ENCODE measurements at regions of chr15 and their contacts with region 1.

Region 1: GRCh38 chr15:40952901-40953712 is at the start of gene CHAC1:
- DNase-seq: peak; percentile 99
- ATAC-seq: peak; percentile 83
- H3K4me3 Mint-ChIP-seq: peak within 1 kb of the TSS; percentile 83
- H3K27ac Mint-ChIP-seq: peak within 1 kb of the TSS; percentile 98
- H3K4me1 Mint-ChIP-seq: peaks cover 39% of the 10 kb centered on the region
- H3K27me3 Mint-ChIP-seq: no peaks in the 10 kb centered on the region
- CTCF ChIP-seq: no peak
- total RNA-seq, gene CHAC1: 17.2 to 31.0 TPM (median 17.7 TPM) in 3 replicates

Region 2: DNA sequence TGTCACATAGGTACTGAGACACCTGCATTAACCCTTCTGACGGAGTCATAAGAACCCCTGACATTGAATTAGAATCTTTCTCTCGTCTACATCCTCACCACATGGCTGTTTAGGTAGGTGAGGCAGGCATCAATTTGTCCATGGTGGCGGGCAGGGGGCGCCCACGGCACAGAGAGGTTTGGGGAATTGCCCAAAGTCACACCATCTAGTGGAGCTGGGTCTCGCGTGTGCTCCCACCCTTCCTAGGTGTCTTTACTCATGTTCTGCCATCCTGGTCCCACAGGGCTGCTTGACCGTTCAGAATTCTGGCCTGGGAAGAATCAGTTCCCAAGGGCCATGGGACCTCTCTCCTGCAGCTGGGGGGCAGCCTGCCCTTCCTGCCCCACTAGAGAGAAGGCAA is 38.6 kb before region 1 on chr15:
- CTCF ChIA-PET with region 1: interaction called, 13 read pairs
- POLR2A ChIA-PET with region 1: interaction called, 7 read pairs
- DNase-seq: no peak
- ATAC-seq: peak; percentile 31
- H3K4me3 Mint-ChIP-seq: no peak overlapping the region
- H3K27ac Mint-ChIP-seq: 0 out of 2 replicates have a peak overlapping the region, but pooled peaks have one; percentile 1
- H3K4me1 Mint-ChIP-seq: peaks cover 22% of the 10 kb centered on the region
- H3K27me3 Mint-ChIP-seq: 0 out of 2 replicates have a peak, but pooled peaks cover 2% of the 10 kb centered on the region
- CTCF ChIP-seq: no peak

Region 3: GRCh38 chr15:40968290-40969085 is 15.4 kb after region 1 on chr15:
- CTCF ChIA-PET with region 1: interaction called, 4 read pairs
- POLR2A ChIA-PET with region 1: interaction called, 22 read pairs
- DNase-seq: no peak
- ATAC-seq: peak; percentile 62
- H3K4me3 Mint-ChIP-seq: no peak overlapping the region
- H3K27ac Mint-ChIP-seq: no peak overlapping the region
- H3K4me1 Mint-ChIP-seq: peaks cover 31% of the 10 kb centered on the region
- H3K27me3 Mint-ChIP-seq: no peaks in the 10 kb centered on the region
- CTCF ChIP-seq: no peak

Region 4: DNA sequence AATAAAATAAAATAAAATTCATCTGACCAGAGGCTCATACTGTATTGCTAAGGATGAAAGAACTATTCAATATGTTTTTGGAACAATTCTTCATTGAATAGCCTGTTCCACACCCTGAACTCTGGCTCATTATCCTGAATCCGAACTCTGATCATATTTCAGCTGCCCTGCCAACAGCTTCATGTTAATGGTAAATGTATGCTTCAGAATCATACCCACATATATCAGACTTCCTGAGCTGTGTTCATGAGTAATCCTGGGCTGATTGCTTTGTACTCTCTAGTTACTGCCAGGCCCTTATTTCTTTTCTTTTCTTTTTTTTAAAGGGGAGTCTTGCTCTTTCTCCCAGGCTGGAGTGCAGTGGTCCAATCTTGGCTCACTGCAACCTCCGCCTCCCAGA is 151.1 kb after region 1 on chr15:
- CTCF ChIA-PET with region 1: no interaction called
- POLR2A ChIA-PET with region 1: no interaction called
- DNase-seq: no peak
- ATAC-seq: no peak
- H3K4me3 Mint-ChIP-seq: no peak overlapping the region
- H3K27ac Mint-ChIP-seq: no peak overlapping the region
- H3K4me1 Mint-ChIP-seq: peaks cover 4% of the 10 kb centered on the region
- H3K27me3 Mint-ChIP-seq: no peaks in the 10 kb centered on the region
- CTCF ChIP-seq: no peak